B cell (primary cell): ENCODE measurements at regions of chr6 and their contacts with region 1.

Region 1: DNA sequence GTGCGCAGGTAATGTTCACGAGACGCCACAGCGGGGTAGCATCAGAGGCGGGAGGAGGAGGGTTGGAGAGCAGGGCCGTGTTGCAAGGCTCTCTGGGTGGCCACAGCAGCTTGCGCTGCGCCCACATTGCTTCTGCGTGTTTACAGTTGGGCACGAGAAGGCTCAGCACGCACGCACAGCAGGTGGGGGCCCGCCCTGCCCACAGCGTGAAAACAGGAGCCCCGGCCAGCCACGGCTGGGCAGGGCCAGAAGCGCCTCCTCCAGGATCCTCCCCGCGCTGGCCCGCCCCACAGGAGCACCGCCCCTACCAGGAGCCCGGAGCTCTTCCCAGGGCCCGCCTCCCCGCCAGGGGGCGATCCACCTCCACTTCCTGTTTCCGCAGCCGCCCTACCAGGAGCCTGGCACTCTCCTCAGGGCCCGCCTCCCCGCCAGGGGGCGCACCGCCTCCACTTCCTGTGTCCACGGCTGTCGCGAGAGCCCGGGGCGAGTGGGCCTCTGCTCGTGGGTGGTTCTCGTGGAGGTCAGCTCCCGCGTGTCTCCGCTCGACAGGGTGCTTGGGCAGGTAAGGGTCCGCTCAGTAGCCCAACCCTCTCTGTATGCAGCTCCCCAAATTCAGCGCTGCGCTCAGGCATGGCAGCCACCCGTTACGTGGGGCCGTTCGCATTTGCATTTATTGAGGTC is at the start of gene FAM50B:
- DNase-seq: peak; percentile 92
- ATAC-seq: peak; percentile 94
- H3K4me3 ChIP-seq: peak within 1 kb of the TSS; percentile 11 to 66 (median 65)
- H3K4me3 Mint-ChIP-seq: peak within 1 kb of the TSS; percentile 90
- H3K27ac ChIP-seq: peak within 1 kb of the TSS; percentile 54 to 65
- H3K27ac Mint-ChIP-seq: peak within 1 kb of the TSS; percentile 94
- H3K4me1 ChIP-seq: peaks cover 6 to 21% of the 10 kb centered on the region in 2 donors
- H3K4me1 Mint-ChIP-seq: peaks cover 21% of the 10 kb centered on the region
- H3K27me3 ChIP-seq: no peaks in the 10 kb centered on the region
- H3K27me3 Mint-ChIP-seq: no peaks in the 10 kb centered on the region
- CTCF ChIP-seq: peak; percentile 84
- total RNA-seq, gene FAM50B: 8.3 and 9.8 TPM in 2 replicates

Region 2: GRCh38 chr6:3766214-3766613 is 82.9 kb before region 1 on chr6:
- CTCF ChIA-PET with region 1: interaction called, 3 read pairs
- POLR2A ChIA-PET with region 1: no interaction called
- intact Hi-C with region 1: loop called (anchors 5 kb)
- DNase-seq: no peak
- ATAC-seq: no peak
- H3K4me3 ChIP-seq: no peak overlapping the region
- H3K4me3 Mint-ChIP-seq: no peak overlapping the region
- H3K27ac ChIP-seq: no peak overlapping the region
- H3K27ac Mint-ChIP-seq: no peak overlapping the region
- H3K4me1 ChIP-seq: peaks cover 28 to 51% of the 10 kb centered on the region in 2 donors
- H3K4me1 Mint-ChIP-seq: peaks cover 54% of the 10 kb centered on the region
- H3K27me3 ChIP-seq: no peaks in the 10 kb centered on the region
- H3K27me3 Mint-ChIP-seq: no peaks in the 10 kb centered on the region
- CTCF ChIP-seq: no peak

Region 3: DNA sequence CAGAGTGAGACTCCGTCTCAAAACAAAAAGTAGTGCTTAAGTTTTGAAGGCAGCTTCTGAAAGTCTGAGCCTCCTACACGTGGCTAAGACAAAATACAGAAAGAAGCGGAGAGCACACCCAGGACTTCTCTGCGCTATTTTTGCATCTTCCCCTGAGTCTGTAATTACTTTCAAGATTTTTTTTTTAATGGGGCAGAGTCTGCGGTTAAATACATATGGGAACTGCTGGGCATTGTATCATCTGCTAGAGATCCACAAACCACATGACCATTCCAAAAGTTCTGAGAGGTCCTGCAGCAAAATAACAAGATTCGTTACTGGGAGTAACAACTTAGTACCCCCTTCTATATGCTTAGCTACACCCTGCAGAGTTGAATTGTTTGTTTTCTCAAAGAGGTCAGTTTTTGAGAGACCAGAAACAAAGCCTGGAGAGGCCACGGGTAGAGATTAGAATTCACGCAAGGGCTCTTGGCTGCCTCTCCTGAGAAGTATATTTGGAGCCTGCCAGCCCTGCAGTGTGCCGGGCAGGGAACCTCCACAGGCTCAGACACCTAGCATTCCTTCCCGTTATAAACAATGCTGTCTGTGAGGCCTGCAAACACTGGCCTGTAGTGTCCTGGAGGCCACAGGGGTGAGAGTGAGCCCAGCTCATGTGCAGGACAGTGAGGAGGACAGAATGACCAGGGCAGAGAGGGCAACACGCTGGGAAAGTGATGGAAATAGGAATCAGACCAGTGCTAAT is 48.0 kb before region 1 on chr6:
- CTCF ChIA-PET with region 1: interaction called, 5 read pairs
- POLR2A ChIA-PET with region 1: no interaction called
- intact Hi-C with region 1: loop called (anchors 5 kb)
- DNase-seq: no peak
- ATAC-seq: no peak
- H3K4me3 ChIP-seq: no peak overlapping the region
- H3K4me3 Mint-ChIP-seq: no peak overlapping the region
- H3K27ac ChIP-seq: no peak overlapping the region
- H3K27ac Mint-ChIP-seq: no peak overlapping the region
- H3K4me1 ChIP-seq: peaks cover 16 to 22% of the 10 kb centered on the region in 2 donors
- H3K4me1 Mint-ChIP-seq: peaks cover 46% of the 10 kb centered on the region
- H3K27me3 ChIP-seq: no peaks in the 10 kb centered on the region
- H3K27me3 Mint-ChIP-seq: no peaks in the 10 kb centered on the region
- CTCF ChIP-seq: no peak

Region 4: GRCh38 chr6:3835055-3835731 is 13.9 kb before region 1 on chr6:
- CTCF ChIA-PET with region 1: interaction called, 11 read pairs
- POLR2A ChIA-PET with region 1: no interaction called
- intact Hi-C with region 1: no loop called
- DNase-seq: no peak
- ATAC-seq: no peak
- H3K4me3 ChIP-seq: no peak overlapping the region
- H3K4me3 Mint-ChIP-seq: no peak overlapping the region
- H3K27ac ChIP-seq: no peak overlapping the region
- H3K27ac Mint-ChIP-seq: no peak overlapping the region
- H3K4me1 ChIP-seq: no peaks in the 10 kb centered on the region
- H3K4me1 Mint-ChIP-seq: peaks cover 1% of the 10 kb centered on the region
- H3K27me3 ChIP-seq: no peaks in the 10 kb centered on the region
- H3K27me3 Mint-ChIP-seq: peaks cover 3% of the 10 kb centered on the region
- CTCF ChIP-seq: no peak

Region 5: DNA sequence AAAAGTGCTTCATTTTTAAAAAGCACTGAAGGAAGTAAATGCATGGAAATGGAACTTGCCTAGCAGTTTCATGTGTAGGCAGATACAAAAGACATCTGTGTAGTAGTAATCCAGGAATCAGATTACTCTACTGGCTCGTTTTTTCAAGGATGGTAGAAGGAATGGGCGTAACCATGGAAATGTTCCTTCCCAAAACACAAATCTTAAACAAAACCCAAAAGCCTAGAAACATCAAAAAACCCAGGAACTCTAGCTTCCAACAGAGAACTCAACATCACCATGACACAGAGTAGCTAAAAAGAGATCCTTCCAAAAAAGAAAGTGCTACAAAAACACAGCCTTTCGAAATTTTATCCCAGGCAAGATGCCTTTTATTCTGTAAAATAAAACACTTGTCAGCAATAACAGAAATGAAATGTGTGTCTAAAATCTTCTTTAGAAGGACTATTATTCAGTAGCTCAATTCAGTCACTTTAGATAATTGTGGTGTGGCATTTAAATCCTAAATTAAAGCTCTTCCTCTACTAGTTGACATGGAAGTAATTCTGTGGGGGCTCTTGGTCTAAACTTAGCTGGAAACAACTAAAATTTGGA is 148.2 kb after region 1 on chr6:
- CTCF ChIA-PET with region 1: no interaction called
- POLR2A ChIA-PET with region 1: no interaction called
- intact Hi-C with region 1: no loop called
- DNase-seq: no peak
- ATAC-seq: no peak
- H3K4me3 ChIP-seq: no peak overlapping the region
- H3K4me3 Mint-ChIP-seq: no peak overlapping the region
- H3K27ac ChIP-seq: no peak overlapping the region
- H3K27ac Mint-ChIP-seq: no peak overlapping the region
- H3K4me1 ChIP-seq: no peaks in the 10 kb centered on the region
- H3K4me1 Mint-ChIP-seq: peaks cover 2% of the 10 kb centered on the region
- H3K27me3 ChIP-seq: no peaks in the 10 kb centered on the region
- H3K27me3 Mint-ChIP-seq: no peaks in the 10 kb centered on the region
- CTCF ChIP-seq: no peak